Colonic mucosa (tissue), 4 donors: ENCODE measurements at regions of chr3 and their contacts with region 1.

Region 1: GRCh38 chr3:52851348-52851747 is 16.5 kb upstream of the MUSTN1 start:
- DNase-seq: no peak
- H3K4me3 ChIP-seq: no peak overlapping the region
- H3K27ac ChIP-seq: no peak overlapping the region
- H3K4me1 ChIP-seq: no peaks in the 10 kb centered on the region
- H3K27me3 ChIP-seq: no peaks in the 10 kb centered on the region
- CTCF ChIP-seq: peak; percentile 22

Region 2: DNA sequence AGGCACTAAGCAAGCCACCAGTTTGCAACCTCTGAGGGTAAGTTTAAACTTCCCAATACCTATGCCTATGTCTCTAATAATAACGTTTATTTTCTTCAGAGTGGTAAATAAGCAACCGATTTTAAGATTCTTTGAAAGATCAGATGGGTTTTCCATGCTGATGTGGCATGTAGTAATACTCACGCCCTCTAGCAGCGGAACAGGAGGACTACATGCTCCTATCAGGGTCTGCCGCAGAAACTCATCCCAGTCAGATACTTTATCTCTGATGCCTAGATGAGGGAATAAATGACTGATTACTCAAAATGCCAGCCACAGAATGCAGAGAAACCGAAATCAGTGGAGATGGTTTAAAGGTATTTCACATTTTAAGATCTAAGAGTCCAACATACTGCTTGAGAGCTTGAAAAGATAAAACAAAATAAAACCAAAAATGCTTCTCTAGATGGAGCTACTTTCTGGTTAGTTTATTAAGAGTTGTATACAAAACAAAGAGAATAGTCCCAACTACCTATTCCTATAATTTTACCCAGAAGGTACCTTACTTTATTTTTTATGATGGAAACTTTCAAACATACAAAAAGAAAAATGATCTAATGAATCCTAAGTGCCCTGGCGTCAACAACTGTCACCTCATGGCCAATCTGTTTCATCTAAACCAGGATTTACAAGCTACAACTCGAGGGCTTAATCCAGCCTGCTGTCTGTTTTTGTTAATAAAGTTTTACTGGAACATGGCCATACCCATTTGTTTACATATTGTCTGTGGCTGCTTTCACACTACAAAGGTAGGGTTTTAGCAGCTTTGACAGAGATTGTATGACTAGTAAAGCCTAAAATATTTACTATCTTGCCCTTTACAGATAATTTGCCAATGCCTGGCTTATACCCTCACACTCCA is 83.5 kb after region 1 on chr3:
- intact Hi-C with region 1: loop called (anchors 5 kb)
- DNase-seq: peak; percentile 36
- H3K4me3 ChIP-seq: no peak overlapping the region
- H3K27ac ChIP-seq: no peak overlapping the region
- H3K4me1 ChIP-seq: no peaks in the 10 kb centered on the region
- H3K27me3 ChIP-seq: no peaks in the 10 kb centered on the region
- CTCF ChIP-seq: peak; percentile 83

Region 3: GRCh38 chr3:53072653-53073552 is 221.6 kb after region 1 on chr3:
- intact Hi-C with region 1: loop called (anchors 10 kb)
- DNase-seq: peak; percentile 93
- H3K4me3 ChIP-seq: peak overlapping the region; percentile 80
- H3K27ac ChIP-seq: peak overlapping the region; percentile 50
- H3K4me1 ChIP-seq: peaks cover 4% of the 10 kb centered on the region
- H3K27me3 ChIP-seq: no peaks in the 10 kb centered on the region
- CTCF ChIP-seq: peak; percentile 92